ENCODE measurements at regions of chr16 and their contacts with region 1.

Region 1: GRCh38 chr16:75471723-75472633 is 7.5 kb upstream of the TMEM170A start:
- DNase-seq: peak; percentile 74
- H3K4me3 Mint-ChIP-seq: no peak overlapping the region
- H3K27ac Mint-ChIP-seq: no peak overlapping the region
- H3K4me1 Mint-ChIP-seq: peaks cover 9% of the 10 kb centered on the region
- H3K27me3 Mint-ChIP-seq: no peaks in the 10 kb centered on the region
- CTCF ChIP-seq: peak; percentile 77

Region 2: GRCh38 chr16:75351183-75351582 is 120.8 kb before region 1 on chr16:
- CTCF ChIA-PET with region 1: no interaction called
- POLR2A ChIA-PET with region 1: no interaction called
- intact Hi-C with region 1: no loop called
- DNase-seq: peak; percentile 69
- H3K4me3 Mint-ChIP-seq: no peak overlapping the region
- H3K27ac Mint-ChIP-seq: peak overlapping the region; percentile 73
- H3K4me1 Mint-ChIP-seq: peaks cover 12% of the 10 kb centered on the region
- H3K27me3 Mint-ChIP-seq: no peaks in the 10 kb centered on the region
- CTCF ChIP-seq: no peak

Region 3: DNA sequence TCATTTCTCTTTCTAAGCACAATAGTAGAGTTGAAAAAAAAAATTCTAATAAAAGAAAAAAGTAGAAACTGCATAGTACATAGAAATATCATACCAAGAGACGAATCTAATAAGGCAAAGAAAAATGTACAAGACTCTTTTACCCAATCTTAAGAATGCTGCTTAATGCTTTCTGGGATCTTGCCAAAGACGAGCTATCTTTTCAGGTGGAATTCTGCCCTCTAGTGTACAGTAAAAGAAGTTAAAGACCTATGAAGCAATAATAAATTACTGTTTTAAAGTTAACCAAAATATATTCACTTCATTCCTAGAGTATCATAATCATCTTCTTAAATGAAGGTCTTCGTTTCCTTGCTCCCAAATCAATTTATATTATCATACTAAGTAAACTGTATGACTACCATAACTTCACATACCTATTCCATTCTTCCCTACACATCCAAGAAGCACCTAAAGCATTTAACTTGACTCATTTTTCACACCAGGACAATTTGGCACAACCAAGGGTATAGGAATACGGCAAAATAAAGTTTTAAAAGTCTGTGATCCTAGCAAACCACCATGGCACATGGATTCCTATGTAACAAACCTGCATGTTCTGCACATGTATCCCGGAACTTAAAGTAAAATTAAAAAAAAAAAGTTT is 86.3 kb before region 1 on chr16:
- CTCF ChIA-PET with region 1: no interaction called
- POLR2A ChIA-PET with region 1: no interaction called
- intact Hi-C with region 1: no loop called
- DNase-seq: peak; percentile 85
- H3K4me3 Mint-ChIP-seq: no peak overlapping the region
- H3K27ac Mint-ChIP-seq: no peak overlapping the region
- H3K4me1 Mint-ChIP-seq: peaks cover 12% of the 10 kb centered on the region
- H3K27me3 Mint-ChIP-seq: no peaks in the 10 kb centered on the region
- CTCF ChIP-seq: peak; percentile 66

Region 4: GRCh38 chr16:75486676-75487313 is 14.8 kb after region 1 on chr16:
- CTCF ChIA-PET with region 1: interaction called, 37 read pairs
- POLR2A ChIA-PET with region 1: interaction called, 21 read pairs
- intact Hi-C with region 1: no loop called
- DNase-seq: no peak
- H3K4me3 Mint-ChIP-seq: no peak overlapping the region
- H3K27ac Mint-ChIP-seq: peak overlapping the region; percentile 70
- H3K4me1 Mint-ChIP-seq: peaks cover 36% of the 10 kb centered on the region
- H3K27me3 Mint-ChIP-seq: no peaks in the 10 kb centered on the region
- CTCF ChIP-seq: no peak

Region 5: DNA sequence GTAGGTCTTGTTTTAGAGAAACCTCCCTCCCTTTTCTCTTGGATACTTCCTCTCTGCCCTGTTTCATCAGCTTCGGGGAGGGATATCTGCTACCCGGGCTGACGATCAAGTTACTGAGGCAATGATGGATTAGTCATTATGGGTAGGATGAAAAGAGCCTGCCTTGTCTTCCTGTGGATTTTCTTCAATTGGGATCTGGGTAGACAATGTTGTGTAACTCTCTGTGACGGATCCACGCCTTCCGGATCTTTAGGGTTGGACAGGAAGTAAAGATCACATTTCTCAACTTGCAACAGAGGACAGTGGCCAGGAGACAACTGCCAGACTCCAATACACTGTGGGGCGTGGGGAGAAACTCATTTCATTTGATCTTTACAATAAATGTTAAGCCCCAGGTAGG is 34.6 kb after region 1 on chr16:
- CTCF ChIA-PET with region 1: interaction called, 25 read pairs
- POLR2A ChIA-PET with region 1: interaction called, 4 read pairs
- intact Hi-C with region 1: no loop called
- DNase-seq: peak; percentile 98
- H3K4me3 Mint-ChIP-seq: peak overlapping the region; percentile 42
- H3K27ac Mint-ChIP-seq: peak overlapping the region; percentile 95
- H3K4me1 Mint-ChIP-seq: peaks cover 34% of the 10 kb centered on the region
- H3K27me3 Mint-ChIP-seq: no peaks in the 10 kb centered on the region
- CTCF ChIP-seq: no peak

Region 6: DNA sequence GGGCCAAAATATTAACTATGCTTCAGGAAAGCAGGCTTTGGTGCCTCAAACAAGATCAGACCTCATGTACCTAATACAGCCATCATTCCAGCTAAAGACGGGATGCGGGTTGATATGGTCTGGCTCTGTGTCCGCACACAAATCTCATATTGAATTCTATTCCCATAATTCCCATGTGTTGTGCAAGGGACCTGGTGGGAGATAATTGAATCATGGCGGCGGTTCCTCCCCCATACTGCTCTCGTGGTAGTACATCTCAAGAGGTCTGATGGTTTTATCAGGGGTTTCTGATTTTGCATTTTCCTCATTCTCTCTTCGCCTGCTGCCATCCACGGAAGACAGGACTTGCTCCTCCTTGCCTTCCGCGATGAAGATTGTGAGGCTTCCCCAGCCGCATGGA is 42.3 kb after region 1 on chr16:
- CTCF ChIA-PET with region 1: interaction called, 88 read pairs
- POLR2A ChIA-PET with region 1: interaction called, 9 read pairs
- intact Hi-C with region 1: loop called (anchors 1 kb)
- DNase-seq: no peak
- H3K4me3 Mint-ChIP-seq: no peak overlapping the region
- H3K27ac Mint-ChIP-seq: no peak overlapping the region
- H3K4me1 Mint-ChIP-seq: no peaks in the 10 kb centered on the region
- H3K27me3 Mint-ChIP-seq: no peaks in the 10 kb centered on the region
- CTCF ChIP-seq: no peak

Region 7: DNA sequence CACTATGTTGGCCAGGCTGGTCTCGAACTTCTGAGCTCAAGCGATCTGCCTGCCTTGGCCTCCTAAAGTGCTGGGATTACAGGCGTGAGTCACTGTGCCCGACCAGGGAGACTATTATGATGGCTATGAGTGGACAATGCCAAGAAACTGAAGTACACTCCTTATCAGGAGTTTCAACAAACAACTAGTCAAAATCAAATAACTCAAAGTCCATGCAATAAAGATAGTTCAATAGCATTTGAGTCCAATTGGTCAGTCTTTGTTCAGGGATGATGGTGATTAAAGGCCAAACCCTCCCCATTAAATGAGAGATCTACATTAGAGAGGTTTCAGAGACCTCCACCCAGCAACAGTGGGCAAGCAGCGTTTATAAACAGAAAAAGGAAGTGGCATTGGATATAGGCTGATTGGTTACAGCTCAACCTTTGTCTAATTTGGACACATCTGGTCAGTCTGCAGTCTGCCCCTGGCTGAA is 55.9 kb after region 1 on chr16:
- CTCF ChIA-PET with region 1: interaction called, 13 read pairs
- POLR2A ChIA-PET with region 1: no interaction called
- intact Hi-C with region 1: no loop called
- DNase-seq: no peak
- H3K4me3 Mint-ChIP-seq: no peak overlapping the region
- H3K27ac Mint-ChIP-seq: no peak overlapping the region
- H3K4me1 Mint-ChIP-seq: no peaks in the 10 kb centered on the region
- H3K27me3 Mint-ChIP-seq: no peaks in the 10 kb centered on the region
- CTCF ChIP-seq: no peak

Region 8: DNA sequence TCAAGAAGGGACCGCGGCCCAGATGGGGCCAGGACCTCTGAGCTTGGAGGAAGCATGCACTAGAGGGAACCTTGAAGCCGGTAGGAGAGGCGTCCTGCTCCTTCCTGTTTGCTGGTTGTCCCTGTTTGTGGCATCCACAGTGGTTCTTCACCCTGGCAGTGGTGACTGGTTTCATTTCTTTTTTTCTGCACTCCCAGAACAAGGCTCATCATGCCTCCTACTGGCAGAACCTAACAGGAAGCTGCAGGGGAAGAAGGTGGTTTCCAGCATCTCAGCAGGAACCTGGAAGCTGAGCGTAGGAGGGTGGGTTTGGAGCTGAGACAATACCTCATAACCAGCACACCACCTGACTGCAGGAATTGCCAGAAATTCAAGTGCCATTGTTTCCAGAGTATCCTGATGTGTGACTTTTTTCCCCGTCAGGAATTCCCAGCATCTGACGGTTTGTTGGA is 78.3 kb after region 1 on chr16:
- CTCF ChIA-PET with region 1: interaction called, 21 read pairs
- POLR2A ChIA-PET with region 1: interaction called, 7 read pairs
- intact Hi-C with region 1: loop called (anchors 1 kb)
- DNase-seq: peak; percentile 82
- H3K4me3 Mint-ChIP-seq: peak overlapping the region; percentile 43
- H3K27ac Mint-ChIP-seq: no peak overlapping the region
- H3K4me1 Mint-ChIP-seq: no peaks in the 10 kb centered on the region
- H3K27me3 Mint-ChIP-seq: no peaks in the 10 kb centered on the region
- CTCF ChIP-seq: peak; percentile 47

Region 9: DNA sequence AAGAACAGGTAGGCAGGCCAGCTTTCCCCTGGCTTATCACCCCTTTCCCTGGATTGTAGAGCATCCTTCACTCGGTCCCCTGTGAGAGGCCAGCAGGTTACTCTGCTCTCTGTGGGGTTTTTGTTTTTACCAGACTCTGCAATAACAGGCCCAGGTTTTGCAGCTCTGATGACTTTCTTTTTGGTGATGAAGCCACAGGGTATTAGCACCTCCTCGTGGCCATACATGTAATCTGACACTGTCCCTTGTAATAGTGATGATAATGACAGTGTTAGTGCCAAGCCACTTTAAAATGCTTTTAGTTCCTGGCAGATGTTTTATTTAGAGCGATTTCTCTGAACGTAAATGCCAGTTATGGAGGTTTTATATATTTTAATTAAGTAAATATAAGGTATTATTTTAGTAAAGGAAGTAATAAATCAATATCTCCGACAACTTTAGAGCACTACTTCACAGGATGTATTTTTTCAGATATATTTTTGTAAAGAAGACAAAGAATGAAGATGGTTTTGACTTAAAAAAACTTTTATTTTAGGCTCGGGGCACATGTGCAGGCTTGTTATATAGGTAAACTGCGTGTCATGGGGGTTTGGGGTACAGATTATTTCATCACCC is 292.3 kb after region 1 on chr16:
- CTCF ChIA-PET with region 1: interaction called, 5 read pairs
- POLR2A ChIA-PET with region 1: interaction called, 6 read pairs
- intact Hi-C with region 1: loop called (anchors 1 kb)
- DNase-seq: peak; percentile 75
- H3K4me3 Mint-ChIP-seq: no peak overlapping the region
- H3K27ac Mint-ChIP-seq: no peak overlapping the region
- H3K4me1 Mint-ChIP-seq: peaks cover 5% of the 10 kb centered on the region
- H3K27me3 Mint-ChIP-seq: peaks cover 13% of the 10 kb centered on the region
- CTCF ChIP-seq: peak; percentile 67

Region 10: GRCh38 chr16:75789237-75789636 is 317.3 kb after region 1 on chr16:
- CTCF ChIA-PET with region 1: no interaction called
- POLR2A ChIA-PET with region 1: no interaction called
- intact Hi-C with region 1: no loop called
- DNase-seq: peak; percentile 69
- H3K4me3 Mint-ChIP-seq: no peak overlapping the region
- H3K27ac Mint-ChIP-seq: no peak overlapping the region
- H3K4me1 Mint-ChIP-seq: no peaks in the 10 kb centered on the region
- H3K27me3 Mint-ChIP-seq: no peaks in the 10 kb centered on the region
- CTCF ChIP-seq: peak; percentile 67

Measured in MCF 10A (cell line).